Activated CD4-positive, alpha-beta T cell treated with anti-CD3 and anti-CD28 coated beads for 36 hours (primary cell): ENCODE measurements at regions of chr19 and their contacts with region 1.

Region 1: DNA sequence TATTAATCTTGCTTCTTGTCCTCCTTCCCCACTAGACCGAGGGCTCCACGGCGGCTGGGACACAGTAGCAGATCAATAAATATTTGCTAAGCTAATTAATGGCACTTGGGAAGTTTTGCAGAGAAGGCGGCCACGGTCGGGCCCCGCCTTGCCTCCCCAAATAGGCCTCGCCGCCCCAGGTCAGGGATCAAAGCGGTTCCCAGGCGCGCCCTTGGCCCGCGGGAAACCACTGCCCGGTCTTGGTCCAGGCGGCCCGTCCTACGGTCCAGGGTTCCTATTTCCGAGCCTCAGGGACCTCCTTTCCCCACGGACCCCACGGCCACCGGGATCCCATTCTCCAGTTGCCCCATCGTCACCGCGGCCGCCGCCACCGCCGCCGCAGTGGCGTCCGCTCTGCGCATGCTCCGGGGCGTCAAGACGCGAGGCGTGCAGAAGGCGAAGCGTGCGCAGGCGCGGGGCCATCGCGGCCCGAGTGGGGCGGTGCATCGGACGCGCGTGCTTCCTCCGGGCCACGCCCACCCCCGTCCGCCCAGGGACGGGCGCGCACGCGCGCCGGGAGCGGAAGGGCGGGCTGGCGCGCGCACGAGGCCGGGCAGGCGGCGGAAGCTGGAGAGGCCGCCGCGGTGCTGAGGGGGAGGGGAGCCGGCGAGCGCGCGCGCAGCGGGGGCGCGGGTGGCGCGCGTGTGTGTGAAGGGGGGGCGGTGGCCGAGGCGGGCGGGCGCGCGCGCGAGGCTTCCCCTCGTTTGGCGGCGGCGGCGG is at the start of gene SMARCA4:
- DNase-seq: peak; percentile 99
- ATAC-seq: peak; percentile 76
- H3K4me3 Mint-ChIP-seq: peak within 1 kb of the TSS; percentile 89
- H3K27ac Mint-ChIP-seq: peak within 1 kb of the TSS; percentile 90
- H3K4me1 Mint-ChIP-seq: peaks cover 38% of the 10 kb centered on the region
- H3K27me3 Mint-ChIP-seq: no peaks in the 10 kb centered on the region
- total RNA-seq, gene SMARCA4: 102 to 116 TPM

Region 2: DNA sequence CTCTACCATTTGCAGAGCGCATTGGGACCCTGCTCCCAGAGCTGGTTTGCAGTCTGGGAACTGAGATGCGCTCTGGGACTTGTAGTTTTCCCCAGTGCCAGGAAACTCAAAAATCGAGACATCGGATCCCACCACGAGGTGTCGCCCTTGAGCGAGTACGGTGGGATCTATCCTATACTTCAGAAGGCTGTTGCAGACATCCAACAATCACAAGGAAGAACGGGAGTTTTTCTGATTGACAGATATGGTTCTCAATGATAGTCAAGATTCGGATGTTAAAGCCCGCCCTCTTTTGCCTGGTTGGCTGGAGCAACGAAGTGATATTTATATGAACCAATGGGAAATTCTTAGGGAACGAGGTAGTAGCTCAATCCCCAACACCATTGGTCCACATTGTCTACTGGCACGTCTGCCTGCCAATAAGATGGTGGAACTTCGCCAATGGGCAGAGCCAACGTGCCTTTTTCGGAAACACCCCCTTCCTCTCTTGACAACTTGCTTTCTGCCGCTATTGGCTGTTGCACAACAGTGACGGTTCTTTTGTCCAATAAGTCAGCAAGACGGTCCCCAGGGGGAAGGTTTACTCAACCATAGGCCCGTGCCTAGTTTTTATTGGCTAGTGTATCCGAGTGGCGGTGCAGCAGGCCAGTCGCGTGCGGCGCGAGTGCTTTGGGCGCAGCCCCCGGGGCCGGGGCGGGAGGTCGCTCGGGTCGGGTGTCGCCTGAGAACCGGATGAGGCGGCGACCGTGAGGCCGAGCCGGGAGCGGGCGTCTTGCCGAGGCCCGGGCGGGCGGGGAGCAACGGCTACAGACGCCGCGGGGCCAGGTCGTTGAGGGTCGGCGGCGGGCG is 242.9 kb before region 1 on chr19 and contains the start of gene DNM2:
- CTCF ChIA-PET with region 1: no interaction called
- POLR2A ChIA-PET with region 1: no interaction called
- intact Hi-C with region 1: loop called in 1 of 2 experiments (anchors 1 kb)
- DNase-seq: peak; percentile 98
- ATAC-seq: peak; percentile 92
- H3K4me3 Mint-ChIP-seq: peak within 1 kb of the TSS; percentile 97
- H3K27ac Mint-ChIP-seq: peak within 1 kb of the TSS; percentile 89
- H3K4me1 Mint-ChIP-seq: peaks cover 45% of the 10 kb centered on the region
- H3K27me3 Mint-ChIP-seq: no peaks in the 10 kb centered on the region
- total RNA-seq, gene DNM2: 167 to 185 TPM

Region 3: GRCh38 chr19:10876459-10877240 is 83.8 kb before region 1 on chr19:
- CTCF ChIA-PET with region 1: interaction called, 3 read pairs
- POLR2A ChIA-PET with region 1: no interaction called
- intact Hi-C with region 1: loop called in 1 of 2 experiments (anchors 1 kb)
- DNase-seq: peak; percentile 25
- ATAC-seq: peak; percentile 14
- H3K4me3 Mint-ChIP-seq: no peak overlapping the region
- H3K27ac Mint-ChIP-seq: peak overlapping the region; percentile 47
- H3K4me1 Mint-ChIP-seq: peaks cover 42% of the 10 kb centered on the region
- H3K27me3 Mint-ChIP-seq: no peaks in the 10 kb centered on the region

Region 4: GRCh38 chr19:11035441-11036377 is 75.2 kb after region 1 on chr19:
- CTCF ChIA-PET with region 1: no interaction called
- POLR2A ChIA-PET with region 1: interaction called, 12 read pairs
- intact Hi-C with region 1: no loop called
- DNase-seq: peak; percentile 94
- ATAC-seq: peak; percentile 99
- H3K4me3 Mint-ChIP-seq: no peak overlapping the region
- H3K27ac Mint-ChIP-seq: peak overlapping the region; percentile 9
- H3K4me1 Mint-ChIP-seq: peaks cover 6% of the 10 kb centered on the region
- H3K27me3 Mint-ChIP-seq: no peaks in the 10 kb centered on the region

Region 5: DNA sequence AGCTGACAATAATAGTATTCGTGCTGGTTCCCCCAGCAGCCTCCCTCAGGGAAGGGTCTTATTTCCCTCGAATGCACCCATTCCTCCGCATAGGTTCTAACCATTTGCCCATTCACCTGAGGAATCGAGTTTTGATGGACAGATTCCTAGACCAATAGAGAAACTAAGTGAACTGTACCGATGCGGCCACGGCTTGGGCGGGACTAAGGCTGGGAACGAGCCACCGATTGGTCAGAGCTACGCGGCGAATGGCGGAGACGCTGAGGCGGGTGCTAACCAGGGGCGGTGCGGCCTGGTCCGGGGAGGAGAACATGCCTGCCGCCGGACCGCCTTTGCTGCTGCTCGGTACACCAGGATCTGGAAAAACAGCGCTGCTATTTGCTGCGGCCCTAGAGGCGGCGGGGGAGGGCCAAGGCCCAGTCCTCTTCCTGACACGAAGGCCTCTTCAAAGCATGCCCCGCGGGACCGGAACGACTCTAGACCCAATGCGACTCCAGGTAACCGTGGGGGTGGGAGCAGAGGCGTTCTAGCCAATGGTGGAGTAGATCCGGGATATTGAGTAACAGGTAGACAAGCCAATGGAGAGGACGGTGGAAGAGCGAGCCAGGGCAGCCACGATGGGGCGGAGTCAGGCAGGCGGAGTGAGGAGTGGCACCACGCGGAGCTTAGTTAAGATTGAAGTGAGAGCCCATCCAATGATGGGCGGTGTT is 414.1 kb after region 1 on chr19 and contains the start of gene SWSAP1:
- CTCF ChIA-PET with region 1: no interaction called
- POLR2A ChIA-PET with region 1: no interaction called
- intact Hi-C with region 1: loop called in 1 of 2 experiments (anchors 2 kb)
- DNase-seq: peak; percentile 98
- ATAC-seq: peak; percentile 92
- H3K4me3 Mint-ChIP-seq: no peak within 1 kb of the TSS
- H3K27ac Mint-ChIP-seq: no peak within 1 kb of the TSS
- H3K4me1 Mint-ChIP-seq: peaks cover 28% of the 10 kb centered on the region
- H3K27me3 Mint-ChIP-seq: no peaks in the 10 kb centered on the region
- total RNA-seq, gene SWSAP1: 1.5 to 1.7 TPM

Region 6: GRCh38 chr19:11597202-11598102 is 637.0 kb after region 1 on chr19 and contains the start of gene ZNF627:
- CTCF ChIA-PET with region 1: no interaction called
- POLR2A ChIA-PET with region 1: no interaction called
- intact Hi-C with region 1: loop called in 1 of 2 experiments (anchors 10 kb)
- DNase-seq: peak; percentile 99
- ATAC-seq: peak; percentile 100
- H3K4me3 Mint-ChIP-seq: peak within 1 kb of the TSS; percentile 97
- H3K27ac Mint-ChIP-seq: peak within 1 kb of the TSS; percentile 91
- H3K4me1 Mint-ChIP-seq: peaks cover 34% of the 10 kb centered on the region
- H3K27me3 Mint-ChIP-seq: no peaks in the 10 kb centered on the region
- total RNA-seq, gene ZNF627: 6.4 to 6.7 TPM